Activated CD8-positive, alpha-beta T cell treated with anti-CD3 and anti-CD28 coated beads for 36 hours (primary cell): ENCODE measurements at regions of chr2 and their contacts with region 1.

Region 1: DNA sequence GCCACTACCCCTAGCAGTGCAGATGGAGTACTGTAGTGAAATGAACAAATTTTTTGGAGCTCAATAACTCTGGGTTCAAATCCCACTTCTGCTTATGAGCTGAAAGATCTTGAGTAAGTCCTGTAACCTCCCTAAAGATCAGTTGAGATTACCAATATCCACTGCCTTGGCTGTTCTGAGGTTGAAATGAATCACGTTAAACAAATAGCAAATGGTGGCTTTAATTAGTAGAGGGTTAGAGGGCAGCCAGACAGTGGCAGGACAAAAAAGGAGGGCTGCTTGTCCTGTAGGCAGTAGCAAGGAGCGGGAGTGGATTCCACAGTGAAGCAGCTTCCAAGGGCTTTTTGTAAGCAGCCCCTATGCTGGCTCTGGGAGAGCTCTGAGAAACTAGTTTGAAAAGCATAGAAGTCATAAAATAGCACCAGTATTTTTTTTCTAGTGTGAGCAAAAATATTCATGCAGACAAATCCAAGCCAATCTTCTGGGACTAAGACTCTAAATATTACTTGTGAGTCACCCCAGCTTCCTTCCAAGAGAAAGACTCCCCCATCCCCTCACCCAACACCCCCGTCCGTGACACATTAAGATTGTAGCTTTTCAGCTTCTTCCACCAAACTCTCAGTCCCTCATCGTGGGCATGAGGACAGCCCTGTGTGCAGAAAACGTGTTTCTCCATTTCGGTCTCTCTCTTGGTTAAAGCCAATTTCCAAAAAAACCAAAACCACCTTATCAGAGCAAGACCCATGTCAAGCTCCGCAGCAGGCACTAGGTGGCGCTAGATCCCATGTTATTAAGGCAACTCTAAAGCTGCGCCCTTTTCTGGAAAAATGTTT is 123.5 kb upstream of the LGALSL start:
- DNase-seq: peak; percentile 84
- ATAC-seq: no peak
- H3K4me3 Mint-ChIP-seq: peak overlapping the region; percentile 41
- H3K27ac Mint-ChIP-seq: peak overlapping the region; percentile 27
- H3K4me1 Mint-ChIP-seq: peaks cover 39% of the 10 kb centered on the region
- H3K27me3 Mint-ChIP-seq: no peaks in the 10 kb centered on the region
- CTCF ChIP-seq: peak; percentile 93

Region 2: GRCh38 chr2:64052468-64053241 is 277.8 kb before region 1 on chr2:
- CTCF ChIA-PET with region 1: interaction called, 374 read pairs
- POLR2A ChIA-PET with region 1: interaction called, 25 read pairs
- intact Hi-C with region 1: loop called (anchors 1 kb)
- DNase-seq: no peak
- ATAC-seq: no peak
- H3K4me3 Mint-ChIP-seq: no peak overlapping the region
- H3K27ac Mint-ChIP-seq: no peak overlapping the region
- H3K4me1 Mint-ChIP-seq: peaks cover 40% of the 10 kb centered on the region
- H3K27me3 Mint-ChIP-seq: no peaks in the 10 kb centered on the region
- CTCF ChIP-seq: no peak

Region 3: GRCh38 chr2:64144057-64145013 is 186.2 kb before region 1 on chr2 and contains the start of gene PELI1:
- CTCF ChIA-PET with region 1: interaction called, 26 read pairs
- POLR2A ChIA-PET with region 1: interaction called, 18 read pairs
- intact Hi-C with region 1: loop called (anchors 2 kb)
- DNase-seq: peak; percentile 95
- ATAC-seq: peak; percentile 94
- H3K4me3 Mint-ChIP-seq: peak within 1 kb of the TSS; percentile 96
- H3K27ac Mint-ChIP-seq: peak within 1 kb of the TSS; percentile 96
- H3K4me1 Mint-ChIP-seq: peaks cover 23% of the 10 kb centered on the region
- H3K27me3 Mint-ChIP-seq: no peaks in the 10 kb centered on the region
- CTCF ChIP-seq: no peak
- total RNA-seq, gene PELI1: 29.8 to 39.2 TPM

Region 4: DNA sequence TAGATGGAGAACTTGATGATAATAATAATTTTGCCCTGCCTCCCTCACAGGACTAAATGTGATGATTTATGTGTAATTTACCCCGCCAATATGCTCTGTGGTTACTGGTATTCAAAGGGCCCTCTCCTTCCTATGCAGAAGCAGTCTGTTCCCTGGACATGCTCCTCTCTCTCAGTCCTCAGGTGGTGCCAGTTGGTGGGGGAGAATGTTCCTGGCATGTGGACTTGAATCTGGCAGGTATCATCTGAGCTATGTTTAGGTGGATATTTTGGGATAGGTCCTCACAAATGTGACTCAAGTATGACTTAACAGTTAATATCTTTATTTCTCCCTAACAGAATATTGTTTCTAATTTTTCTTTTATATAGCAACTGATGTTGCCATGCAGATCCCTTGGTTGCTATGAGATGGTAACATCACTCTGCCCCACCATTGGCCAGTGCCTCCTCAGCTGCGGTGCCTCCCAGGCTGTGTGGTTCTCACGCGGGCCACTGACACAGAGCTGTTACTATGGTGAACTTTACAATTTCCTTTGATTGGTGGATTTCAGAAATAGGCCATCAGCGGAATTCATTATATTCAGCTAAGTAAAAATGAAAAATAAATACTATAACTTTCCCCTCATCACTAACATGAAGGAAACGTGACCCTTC is 79.6 kb before region 1 on chr2:
- CTCF ChIA-PET with region 1: no interaction called
- POLR2A ChIA-PET with region 1: no interaction called
- intact Hi-C with region 1: no loop called
- DNase-seq: no peak
- ATAC-seq: no peak
- H3K4me3 Mint-ChIP-seq: no peak overlapping the region
- H3K27ac Mint-ChIP-seq: no peak overlapping the region
- H3K4me1 Mint-ChIP-seq: no peaks in the 10 kb centered on the region
- H3K27me3 Mint-ChIP-seq: no peaks in the 10 kb centered on the region
- CTCF ChIP-seq: no peak

Region 5: DNA sequence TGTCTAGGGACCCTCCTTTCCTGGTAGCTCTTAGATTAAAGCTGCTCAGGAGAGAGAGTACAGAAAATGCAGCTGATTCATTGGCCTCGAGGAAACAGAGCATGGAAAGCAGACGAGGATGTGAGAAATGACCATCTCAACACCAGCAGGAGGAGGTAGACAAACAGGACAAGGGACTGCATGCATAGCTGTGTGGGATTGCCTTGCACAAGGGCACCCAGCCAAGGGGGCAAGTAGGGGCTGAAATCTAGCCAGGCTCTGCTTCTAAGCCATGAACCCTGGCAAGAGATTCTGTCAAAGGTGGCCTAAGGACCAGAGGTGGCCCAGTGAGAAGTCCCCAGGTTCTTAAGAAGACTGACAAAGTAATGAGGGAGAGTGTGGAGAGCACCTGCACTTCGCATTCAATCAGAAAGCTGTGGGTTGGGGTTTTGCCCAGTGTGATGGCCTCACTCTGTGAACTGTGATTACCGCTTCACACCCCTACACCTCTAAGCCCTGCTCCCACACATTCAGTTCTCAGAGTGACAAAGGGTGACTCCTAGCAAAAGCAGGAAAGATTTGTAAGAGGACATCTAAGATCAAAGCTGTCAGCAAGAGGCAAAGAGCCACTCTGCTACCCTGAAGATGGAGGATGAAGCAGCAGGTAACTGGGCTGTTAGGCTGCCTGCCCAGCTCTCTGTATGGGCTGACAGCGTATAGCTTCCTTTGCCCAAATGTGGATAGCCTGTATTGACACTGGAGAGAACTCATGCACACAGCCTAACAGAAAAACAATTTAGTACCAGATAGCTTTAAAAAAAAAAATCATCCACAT is 35.0 kb before region 1 on chr2:
- CTCF ChIA-PET with region 1: interaction called, 32 read pairs
- POLR2A ChIA-PET with region 1: interaction called, 13 read pairs
- intact Hi-C with region 1: no loop called
- DNase-seq: peak; percentile 77
- ATAC-seq: peak; percentile 94
- H3K4me3 Mint-ChIP-seq: no peak overlapping the region
- H3K27ac Mint-ChIP-seq: no peak overlapping the region
- H3K4me1 Mint-ChIP-seq: peaks cover 24% of the 10 kb centered on the region
- H3K27me3 Mint-ChIP-seq: peaks cover 1% of the 10 kb centered on the region
- CTCF ChIP-seq: no peak

Region 6: GRCh38 chr2:64410671-64411070 is 80.2 kb after region 1 on chr2:
- CTCF ChIA-PET with region 1: interaction called, 10 read pairs
- POLR2A ChIA-PET with region 1: no interaction called
- intact Hi-C with region 1: no loop called
- DNase-seq: peak; percentile 15
- ATAC-seq: peak; percentile 51
- H3K4me3 Mint-ChIP-seq: no peak overlapping the region
- H3K27ac Mint-ChIP-seq: no peak overlapping the region
- H3K4me1 Mint-ChIP-seq: no peaks in the 10 kb centered on the region
- H3K27me3 Mint-ChIP-seq: peaks cover 2% of the 10 kb centered on the region
- CTCF ChIP-seq: no peak

Region 7: DNA sequence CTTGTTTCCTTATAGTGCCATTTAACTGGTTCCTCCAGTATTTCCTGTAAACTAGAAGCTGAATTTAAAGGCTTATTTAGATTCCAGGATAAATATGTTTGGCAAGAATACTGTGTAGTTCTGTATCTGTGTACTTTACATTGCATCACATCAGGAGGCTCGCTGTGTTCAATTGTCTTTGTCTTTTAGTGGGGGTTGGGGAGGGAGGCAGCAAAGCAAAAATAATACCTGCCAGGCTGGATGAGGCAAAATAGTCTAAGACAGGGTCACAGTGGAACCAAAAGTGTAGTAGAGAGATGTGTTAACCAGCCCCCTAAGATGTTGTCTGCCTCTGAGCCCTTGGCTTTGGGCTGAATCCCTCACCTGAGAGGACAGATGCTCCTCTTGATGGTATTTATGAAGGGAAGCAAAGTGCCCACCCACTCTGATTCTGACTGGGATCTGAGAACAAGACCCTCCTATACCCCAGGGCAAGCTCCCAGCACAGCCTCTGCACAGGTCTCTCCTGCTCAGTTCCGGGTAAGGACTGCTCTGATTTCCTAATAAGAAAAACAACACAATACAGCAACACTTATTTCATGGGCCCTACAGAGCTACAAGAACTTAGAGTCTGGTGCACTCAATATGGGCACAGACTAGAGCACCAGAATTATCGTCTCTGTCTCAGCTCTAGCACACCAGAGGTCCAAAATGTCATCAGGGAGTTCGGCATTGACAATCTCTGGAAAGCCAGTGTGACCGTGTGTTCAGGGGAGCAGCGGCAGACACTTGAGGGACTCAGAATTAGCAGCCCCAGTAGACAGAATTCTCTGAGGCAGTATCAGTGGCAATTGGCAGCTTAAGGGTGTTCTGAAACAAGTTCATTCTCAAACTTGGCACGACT is 186.4 kb after region 1 on chr2:
- CTCF ChIA-PET with region 1: interaction called, 21 read pairs
- POLR2A ChIA-PET with region 1: no interaction called
- intact Hi-C with region 1: no loop called
- DNase-seq: no peak
- ATAC-seq: no peak
- H3K4me3 Mint-ChIP-seq: no peak overlapping the region
- H3K27ac Mint-ChIP-seq: no peak overlapping the region
- H3K4me1 Mint-ChIP-seq: no peaks in the 10 kb centered on the region
- H3K27me3 Mint-ChIP-seq: peaks cover 2% of the 10 kb centered on the region
- CTCF ChIP-seq: no peak

Region 8: GRCh38 chr2:64988420-64989125 is 658.1 kb after region 1 on chr2:
- CTCF ChIA-PET with region 1: no interaction called
- POLR2A ChIA-PET with region 1: no interaction called
- intact Hi-C with region 1: no loop called
- DNase-seq: peak; percentile 80
- ATAC-seq: peak; percentile 39
- H3K4me3 Mint-ChIP-seq: peak overlapping the region; percentile 73
- H3K27ac Mint-ChIP-seq: peak overlapping the region; percentile 73
- H3K4me1 Mint-ChIP-seq: peaks cover 48% of the 10 kb centered on the region
- H3K27me3 Mint-ChIP-seq: peaks cover 10% of the 10 kb centered on the region
- CTCF ChIP-seq: peak; percentile 48